ENCODE measurements at regions of chr19 and their contacts with region 1.

Region 1: GRCh38 chr19:48795055-48795684 is 15.7 kb downstream of the BCAT2 start:
- DNase-seq: peak; percentile 95
- ATAC-seq: peak; percentile 98

Region 2: DNA sequence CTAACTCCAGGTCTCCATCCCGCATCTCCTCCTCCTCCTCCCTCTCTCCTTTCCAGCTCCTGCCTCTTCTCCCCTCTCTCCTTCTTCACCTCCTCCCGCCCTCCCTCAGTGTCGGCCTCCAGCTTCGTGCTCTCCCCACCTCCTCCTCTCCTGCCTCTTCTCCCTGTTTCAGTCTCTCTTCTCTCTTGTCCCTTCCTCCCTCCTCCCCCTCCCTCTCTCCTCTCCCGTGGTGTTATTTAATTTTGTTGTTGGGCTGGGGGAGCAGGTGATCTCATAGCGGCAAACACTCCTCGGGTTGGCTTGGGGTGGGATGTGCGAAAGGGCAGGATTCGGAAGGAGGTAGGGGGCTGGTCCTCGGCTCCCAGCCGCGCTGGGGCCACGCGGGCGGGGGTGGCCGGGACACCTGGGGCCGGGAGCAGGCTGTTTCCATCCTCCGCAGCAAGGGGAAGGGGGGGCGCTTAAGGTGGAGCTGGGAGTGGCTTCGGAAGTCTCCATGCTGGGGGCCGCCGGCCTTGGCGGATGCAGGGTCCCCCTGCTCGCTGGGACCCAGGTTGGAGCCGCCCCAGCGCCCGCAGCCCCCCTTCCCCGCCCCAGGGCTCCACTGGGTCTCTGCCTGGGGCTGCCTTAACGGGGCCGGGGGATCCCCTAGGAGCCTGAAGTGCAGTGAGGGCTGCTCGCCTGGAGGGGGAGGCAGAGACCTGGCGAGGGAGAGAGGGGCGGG is 149.0 kb before region 1 on chr19 and contains the start of gene CA11:
- intact Hi-C with region 1: no loop called
- DNase-seq: peak; percentile 87
- ATAC-seq: peak; percentile 92
- total RNA-seq, gene CA11: 8.4 TPM

Region 3: DNA sequence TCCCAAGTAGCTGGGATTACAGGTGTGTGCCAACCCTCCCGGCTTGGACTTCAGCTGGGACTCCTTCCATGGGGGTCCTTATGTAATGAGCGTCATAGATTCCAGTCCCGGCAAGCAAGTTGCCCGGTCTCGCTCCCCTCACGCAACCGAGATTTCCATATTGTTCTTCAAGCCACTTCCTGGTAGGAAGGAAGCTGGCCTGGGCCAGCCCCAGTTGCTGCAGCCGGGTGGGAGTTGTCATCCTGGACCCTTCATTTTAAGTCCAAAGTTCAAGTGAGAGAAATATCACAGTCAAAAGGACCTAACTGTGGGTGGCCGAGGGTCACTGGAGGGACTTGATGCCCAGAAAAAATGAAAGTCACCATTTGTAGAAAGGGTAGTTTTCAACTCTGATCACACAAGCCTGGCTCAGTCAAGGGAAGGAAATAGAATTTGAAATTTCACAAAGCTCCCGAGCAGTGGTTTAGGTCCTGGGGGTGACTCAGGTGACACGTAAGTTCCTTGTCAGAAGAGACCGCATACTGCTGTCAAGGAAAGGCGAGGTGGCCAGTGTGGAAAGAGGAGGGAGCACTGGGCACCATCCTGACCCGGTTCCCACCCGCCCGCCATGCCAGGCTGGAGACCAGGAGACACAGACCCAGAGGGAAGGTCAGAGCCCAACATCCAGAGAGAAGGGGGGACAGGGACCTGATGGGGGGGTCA is 34.5 kb before region 1 on chr19:
- intact Hi-C with region 1: no loop called
- DNase-seq: no peak
- ATAC-seq: no peak

Region 4: DNA sequence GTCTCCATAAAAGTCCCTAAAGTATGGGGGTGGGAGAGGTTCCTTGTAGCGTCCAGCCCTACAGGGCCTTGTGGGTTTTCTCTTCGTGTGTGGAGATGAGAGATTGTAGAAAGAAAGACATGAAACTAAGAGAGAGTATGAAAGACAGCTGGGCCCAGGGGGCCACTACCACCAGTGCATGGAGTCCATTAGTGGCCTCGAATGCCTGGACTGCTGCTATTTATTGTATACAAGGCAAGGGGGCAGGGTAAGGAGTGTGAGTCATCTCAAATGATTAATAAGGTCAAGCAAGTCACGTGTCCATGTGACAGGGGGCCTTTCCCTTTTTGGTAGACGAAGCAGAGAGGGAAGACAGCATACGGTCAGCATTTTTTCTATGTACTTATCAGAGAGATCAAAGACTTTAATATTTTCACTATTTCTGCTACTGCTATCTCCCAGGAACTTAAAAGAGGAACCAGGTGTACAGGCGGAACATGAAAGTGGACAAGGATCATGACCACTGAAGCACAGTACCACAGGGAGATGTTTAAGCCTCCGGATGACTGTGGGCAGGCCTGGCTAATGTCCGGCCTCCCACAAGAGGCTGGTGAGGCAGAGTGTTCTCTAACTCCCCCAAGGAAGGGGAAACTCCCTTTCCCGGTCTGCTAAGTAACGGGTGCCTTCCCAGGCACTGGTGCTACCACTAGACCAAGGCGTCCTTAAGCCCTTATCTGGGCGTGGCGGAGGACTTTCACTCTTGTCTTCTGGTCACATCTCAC is 14.4 kb before region 1 on chr19:
- intact Hi-C with region 1: no loop called
- DNase-seq: no peak
- ATAC-seq: no peak

Region 5: GRCh38 chr19:48807590-48808308 is 12.6 kb after region 1 on chr19:
- intact Hi-C with region 1: loop called (anchors 2 kb)
- DNase-seq: no peak
- ATAC-seq: no peak

Region 6: DNA sequence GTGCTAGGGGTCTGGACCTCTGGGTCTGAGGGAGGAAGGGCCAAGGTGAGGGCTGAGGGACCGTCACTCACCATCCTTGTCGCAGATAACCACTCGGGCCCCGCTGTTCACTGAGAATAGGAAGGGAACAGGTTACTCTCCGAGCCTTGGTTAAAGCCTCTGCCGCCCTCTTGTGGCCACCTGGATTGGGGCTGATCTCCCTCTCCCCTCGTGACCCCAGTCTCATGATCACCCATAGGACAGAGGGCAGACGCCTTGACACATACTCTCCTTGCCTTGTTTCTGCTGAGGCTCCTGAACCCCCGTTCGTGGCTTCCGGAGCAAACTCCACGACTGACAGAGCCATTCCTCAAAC is 40.5 kb after region 1 on chr19:
- intact Hi-C with region 1: loop called (anchors 1 kb)
- DNase-seq: peak; percentile 92
- ATAC-seq: peak; percentile 89

Region 7: GRCh38 chr19:48970923-48971395 is 175.8 kb after region 1 on chr19:
- intact Hi-C with region 1: loop called (anchors 5 kb)
- DNase-seq: peak; percentile 91
- ATAC-seq: peak; percentile 62